ENCODE measurements at regions of chr3 and their contacts with region 1.

Region 1: GRCh38 chr3:27312044-27312668 is 57.0 kb downstream of the NEK10 start:
- DNase-seq: peak; percentile 12 to 34
- H3K4me3 ChIP-seq: no peak overlapping the region
- H3K27ac ChIP-seq: no peak overlapping the region
- H3K4me1 ChIP-seq: peaks cover 16% of the 10 kb centered on the region
- H3K27me3 ChIP-seq: no peaks in the 10 kb centered on the region
- CTCF ChIP-seq: peak; percentile 83

Region 2: DNA sequence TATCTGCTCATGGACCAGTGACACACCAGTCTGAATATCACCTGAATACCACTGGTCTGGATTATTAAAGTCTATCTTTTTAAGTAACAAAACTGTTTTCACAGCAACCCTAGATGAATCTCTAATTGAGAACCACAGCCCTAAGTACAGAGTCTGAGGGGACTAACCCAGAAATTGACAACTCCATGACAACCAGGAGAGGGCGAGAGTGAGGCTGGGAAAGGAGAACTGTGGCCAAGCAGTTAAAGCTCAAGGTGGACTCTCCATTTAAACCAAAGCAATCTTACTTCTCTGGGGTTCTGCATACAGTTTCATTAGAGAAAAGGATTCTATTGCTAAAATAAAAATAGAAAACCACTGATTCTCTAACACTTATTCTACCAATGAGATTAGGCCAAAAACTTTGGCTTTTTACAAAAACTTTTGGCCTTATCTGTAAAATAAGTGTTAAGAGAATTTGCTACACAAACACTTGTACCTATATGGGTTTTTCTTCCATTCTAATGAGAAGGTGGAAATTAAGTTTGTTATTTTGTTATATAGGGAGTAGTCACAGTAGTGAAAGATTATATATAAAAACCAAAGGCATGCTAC is 45.6 kb after region 1 on chr3:
- CTCF ChIA-PET with region 1: no interaction called
- POLR2A ChIA-PET with region 1: no interaction called
- intact Hi-C with region 1: loop called (anchors 5 kb)
- DNase-seq: peak; percentile 29 to 37
- H3K4me3 ChIP-seq: no peak overlapping the region
- H3K27ac ChIP-seq: no peak overlapping the region
- H3K4me1 ChIP-seq: peaks cover 28% of the 10 kb centered on the region
- H3K27me3 ChIP-seq: no peaks in the 10 kb centered on the region
- CTCF ChIP-seq: peak; percentile 64

Region 3: GRCh38 chr3:28328188-28329151 is 1016.3 kb after region 1 on chr3:
- CTCF ChIA-PET with region 1: no interaction called
- POLR2A ChIA-PET with region 1: no interaction called
- intact Hi-C with region 1: loop called (anchors 2 kb)
- DNase-seq: no peak
- H3K4me3 ChIP-seq: no peak overlapping the region
- H3K27ac ChIP-seq: no peak overlapping the region
- H3K4me1 ChIP-seq: no peaks in the 10 kb centered on the region
- H3K27me3 ChIP-seq: no peaks in the 10 kb centered on the region
- CTCF ChIP-seq: peak; percentile 82